PC-9 (cell line): ENCODE measurements at regions of chr18 and their contacts with region 1.

Region 1: DNA sequence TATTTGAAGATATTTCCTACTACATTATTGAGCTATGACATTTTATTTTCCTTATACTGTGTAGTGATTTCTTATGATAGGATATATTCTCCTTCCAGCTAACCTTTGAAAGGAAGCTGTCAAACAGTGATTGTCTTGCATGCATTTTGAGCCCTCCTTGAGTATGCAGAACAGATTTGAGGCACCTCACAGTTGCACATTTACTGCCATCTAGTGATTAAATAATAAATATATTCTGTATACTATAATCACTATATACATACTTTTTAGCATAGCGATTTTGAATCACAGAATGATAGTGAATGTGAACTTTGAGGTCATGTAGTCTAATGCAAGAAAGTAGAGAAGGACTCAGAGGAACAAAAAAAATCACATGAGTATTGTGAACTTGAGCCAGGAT is 268.4 kb upstream of the CDH19 start:
- DNase-seq: no peak
- H3K4me3 ChIP-seq: no peak overlapping the region
- H3K27ac ChIP-seq: no peak overlapping the region
- H3K4me1 ChIP-seq: no peaks in the 10 kb centered on the region
- H3K27me3 ChIP-seq: no peaks in the 10 kb centered on the region
- CTCF ChIP-seq: peak; percentile 47; the same call in 1 of the 2 replicates

Region 2: GRCh38 chr18:65725251-65726050 is 1146.8 kb before region 1 on chr18:
- CTCF ChIA-PET with region 1: no interaction called
- POLR2A ChIA-PET with region 1: no interaction called
- intact Hi-C with region 1: loop called (anchors 10 kb)
- DNase-seq: peak in 1 of 2 experiments; percentile 21
- H3K4me3 ChIP-seq: no peak overlapping the region
- H3K27ac ChIP-seq: no peak overlapping the region
- H3K4me1 ChIP-seq: no peaks in the 10 kb centered on the region
- H3K27me3 ChIP-seq: no peaks in the 10 kb centered on the region
- CTCF ChIP-seq: peak; percentile 55

Region 3: DNA sequence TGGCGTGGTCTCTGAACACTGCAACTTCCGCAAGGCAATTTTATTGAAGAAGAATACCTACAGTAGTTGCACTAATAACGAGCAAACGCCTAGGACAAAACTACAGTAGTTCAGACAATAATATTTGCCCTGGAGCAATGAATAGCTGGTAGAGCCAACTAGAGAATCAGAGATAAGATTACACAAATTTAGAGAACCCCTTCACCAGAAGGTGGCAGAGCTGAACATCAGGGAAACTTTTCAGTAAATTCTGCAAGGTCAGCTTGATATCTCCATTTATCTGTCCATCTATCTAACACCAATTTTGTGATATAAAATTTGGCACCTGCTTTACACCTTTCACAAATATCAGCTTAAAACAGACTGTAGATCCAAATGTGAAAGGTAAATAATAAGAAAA is 312.2 kb before region 1 on chr18:
- CTCF ChIA-PET with region 1: no interaction called
- POLR2A ChIA-PET with region 1: no interaction called
- intact Hi-C with region 1: loop called (anchors 1 kb)
- DNase-seq: peak; percentile 8 to 47
- H3K4me3 ChIP-seq: no peak overlapping the region
- H3K27ac ChIP-seq: no peak overlapping the region
- H3K4me1 ChIP-seq: no peaks in the 10 kb centered on the region
- H3K27me3 ChIP-seq: no peaks in the 10 kb centered on the region
- CTCF ChIP-seq: peak; percentile 64

Region 4: DNA sequence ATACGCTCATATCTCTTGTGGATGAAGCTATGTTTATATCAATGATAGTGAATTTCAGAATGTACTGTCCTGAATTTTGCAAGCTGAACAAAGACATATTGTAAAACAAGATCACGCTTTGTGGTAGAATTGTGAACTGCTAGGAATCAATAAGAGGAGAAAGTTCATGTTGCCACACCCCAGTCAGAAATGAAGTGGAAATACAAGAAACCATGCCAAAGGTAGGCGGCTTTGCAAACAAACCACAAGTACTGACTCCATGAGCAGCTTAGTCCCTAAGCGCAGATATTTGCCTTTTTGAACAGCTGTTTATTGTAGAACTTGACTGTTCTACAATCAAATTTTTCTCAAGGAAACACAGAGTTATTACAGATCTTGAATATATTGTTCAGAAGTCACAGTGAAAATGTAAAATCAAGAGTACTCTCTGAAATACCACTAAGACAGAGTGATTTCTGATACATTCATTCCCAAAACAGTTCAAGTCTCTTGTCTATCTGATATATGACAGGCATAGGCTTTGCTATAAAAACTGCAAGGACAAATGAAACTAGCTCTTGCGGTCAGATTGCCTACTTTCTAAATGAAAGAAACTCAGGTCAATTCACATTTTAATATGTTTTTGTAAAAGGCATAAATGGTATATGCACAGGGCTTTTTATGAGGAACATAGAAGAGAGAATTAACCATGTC is 147.5 kb before region 1 on chr18:
- CTCF ChIA-PET with region 1: no interaction called
- POLR2A ChIA-PET with region 1: no interaction called
- intact Hi-C with region 1: no loop called
- DNase-seq: peak; percentile 10 to 76
- H3K4me3 ChIP-seq: no peak overlapping the region; the same call in 1 of the 2 replicates
- H3K27ac ChIP-seq: no peak overlapping the region
- H3K4me1 ChIP-seq: peaks cover 21% of the 10 kb centered on the region
- H3K27me3 ChIP-seq: no peaks in the 10 kb centered on the region
- CTCF ChIP-seq: no peak

Region 5: GRCh38 chr18:67104700-67105284 is 232.5 kb after region 1 on chr18:
- CTCF ChIA-PET with region 1: no interaction called
- POLR2A ChIA-PET with region 1: no interaction called
- intact Hi-C with region 1: no loop called
- DNase-seq: peak; percentile 23 to 45
- H3K4me3 ChIP-seq: no peak overlapping the region
- H3K27ac ChIP-seq: no peak overlapping the region
- H3K4me1 ChIP-seq: no peaks in the 10 kb centered on the region
- H3K27me3 ChIP-seq: no peaks in the 10 kb centered on the region
- CTCF ChIP-seq: peak; percentile 82